GM10248 (cell line): ENCODE measurements at regions of chr17 and their contacts with region 1.

Region 1: DNA sequence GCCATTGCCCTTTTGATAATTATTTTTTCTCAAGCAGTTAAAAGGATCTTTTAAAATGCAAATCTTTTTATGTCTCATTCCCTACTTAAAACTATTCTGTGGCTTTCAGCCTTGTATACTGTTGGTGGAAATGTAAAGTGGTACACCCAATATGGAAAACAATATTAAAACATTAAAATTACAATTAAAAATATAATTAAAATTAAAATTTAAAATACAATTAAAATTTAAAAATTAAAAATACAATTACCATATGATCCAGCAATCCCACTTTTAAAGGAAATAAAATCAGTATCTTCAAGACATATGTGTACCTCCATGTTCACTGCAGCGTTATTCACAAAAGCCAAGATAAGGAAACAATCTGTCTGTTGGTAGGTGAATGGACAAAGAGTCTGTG is 340.8 kb upstream of the TOM1L1 start:
- DNase-seq: no peak
- CTCF ChIP-seq: no peak

Region 2: GRCh38 chr17:54544249-54544648 is 15.6 kb before region 1 on chr17:
- CTCF ChIA-PET with region 1: interaction called, 10 read pairs
- POLR2A ChIA-PET with region 1: no interaction called
- DNase-seq: no peak
- CTCF ChIP-seq: no peak